ENCODE measurements at regions of chr11 and their contacts with region 1.

Region 1: DNA sequence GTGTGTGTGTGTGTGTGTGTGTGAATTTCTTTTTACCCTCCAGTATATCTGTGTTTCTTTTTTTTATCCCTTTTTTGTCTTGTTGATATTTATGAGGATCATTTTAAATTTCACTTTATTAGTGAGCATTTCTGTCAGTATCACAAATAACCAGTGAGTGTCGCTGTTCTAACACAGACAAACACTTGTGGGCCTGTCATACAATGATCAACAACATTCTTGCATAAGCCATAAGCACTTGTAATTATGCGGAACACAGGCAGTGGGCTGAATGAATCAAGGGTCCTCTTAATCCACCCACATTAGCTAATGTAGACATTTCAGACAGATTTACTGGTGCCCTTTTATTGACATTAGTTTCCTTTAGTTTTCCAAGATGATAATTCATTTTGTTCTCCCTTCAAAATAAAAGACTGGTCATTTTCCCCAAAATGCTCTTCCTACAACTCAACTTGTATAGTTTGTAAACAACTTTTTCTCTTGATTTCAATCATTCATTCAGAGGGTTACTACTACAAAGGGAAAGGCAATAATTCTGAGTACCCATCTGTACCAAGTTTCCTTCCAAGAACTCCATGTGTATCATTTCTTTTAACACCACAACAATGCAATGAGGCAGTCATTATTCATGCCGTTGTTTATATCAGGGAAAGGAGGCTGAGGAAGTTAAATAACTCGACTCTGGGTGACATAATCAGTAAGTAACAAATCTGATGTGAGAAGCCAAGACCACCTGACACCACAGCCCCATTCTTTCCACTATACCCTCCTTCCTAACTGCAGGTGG is 34.5 kb upstream of the ANO3 start:
- DNase-seq: no peak
- ATAC-seq: peak; percentile 60

Region 2: DNA sequence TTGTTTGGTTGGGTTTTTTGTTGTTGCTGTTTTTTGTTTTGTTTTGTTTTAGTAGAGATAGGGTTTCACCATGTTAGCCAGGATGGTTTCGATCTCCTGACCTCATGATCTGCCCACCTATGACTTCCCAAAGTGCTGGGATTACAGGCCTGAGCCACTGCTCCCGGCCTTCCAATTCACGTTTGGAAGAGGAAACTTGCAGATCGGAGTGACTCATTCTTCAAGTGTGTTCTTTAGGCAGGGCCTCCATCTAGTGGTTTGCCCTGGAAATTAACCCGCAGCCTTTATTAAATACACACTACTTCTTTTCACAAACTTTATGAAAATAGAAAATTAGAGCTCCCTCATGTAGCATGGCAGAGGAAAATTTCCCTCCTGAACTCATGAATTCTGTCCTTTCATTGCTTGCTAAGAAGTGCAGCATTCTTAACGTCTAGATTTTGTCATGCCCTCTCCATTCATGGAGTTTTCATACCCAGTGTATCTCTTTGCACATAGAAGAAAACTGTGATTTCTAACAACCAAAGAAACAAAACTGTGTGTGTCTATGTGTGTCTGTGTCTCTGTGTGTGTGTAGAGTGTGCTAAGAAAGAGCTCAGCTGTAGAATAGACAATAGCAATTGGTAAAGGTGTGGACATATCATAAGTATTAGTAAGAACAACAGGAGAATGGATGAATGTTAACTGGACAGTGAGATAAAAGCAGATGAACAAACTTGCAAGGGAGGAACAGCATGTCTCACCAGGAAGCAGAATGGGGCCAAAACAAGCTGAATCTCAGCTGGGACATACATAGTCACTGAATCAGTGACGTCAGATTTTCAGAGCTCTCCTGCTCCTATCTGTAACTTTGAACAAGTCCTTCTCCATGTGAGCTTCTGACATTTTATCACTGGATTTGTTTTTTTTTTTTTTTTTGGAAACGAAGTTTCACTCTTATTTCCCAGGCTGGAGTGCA is 861.6 kb after region 1 on chr11:
- intact Hi-C with region 1: loop called (anchors 10 kb)
- DNase-seq: no peak
- ATAC-seq: peak; percentile 80